ENCODE measurements at regions of chrX and their contacts with region 1.

Region 1: DNA sequence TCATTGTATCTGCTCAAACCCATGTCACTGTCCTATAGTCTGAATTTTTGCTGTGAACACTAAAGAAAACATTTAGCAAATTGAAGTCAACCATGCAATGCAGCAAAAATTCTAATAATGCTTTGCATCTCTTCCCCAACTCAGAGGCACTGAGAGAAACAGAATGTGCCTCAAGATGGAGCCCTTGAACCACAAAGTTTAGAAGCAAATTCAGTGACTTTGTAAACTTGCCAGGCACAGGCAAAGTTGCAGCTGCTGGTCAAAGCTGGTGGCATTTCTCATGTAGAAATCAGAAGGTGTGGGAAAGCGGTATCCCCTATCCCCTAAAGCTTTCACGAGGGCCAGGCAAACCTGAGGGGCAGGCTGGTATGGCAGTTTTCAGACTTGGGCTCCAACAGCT is 121.7 kb upstream of the DIPK2B start:
- DNase-seq: peak; percentile 22 to 30
- ATAC-seq: peak; percentile 83

Region 2: DNA sequence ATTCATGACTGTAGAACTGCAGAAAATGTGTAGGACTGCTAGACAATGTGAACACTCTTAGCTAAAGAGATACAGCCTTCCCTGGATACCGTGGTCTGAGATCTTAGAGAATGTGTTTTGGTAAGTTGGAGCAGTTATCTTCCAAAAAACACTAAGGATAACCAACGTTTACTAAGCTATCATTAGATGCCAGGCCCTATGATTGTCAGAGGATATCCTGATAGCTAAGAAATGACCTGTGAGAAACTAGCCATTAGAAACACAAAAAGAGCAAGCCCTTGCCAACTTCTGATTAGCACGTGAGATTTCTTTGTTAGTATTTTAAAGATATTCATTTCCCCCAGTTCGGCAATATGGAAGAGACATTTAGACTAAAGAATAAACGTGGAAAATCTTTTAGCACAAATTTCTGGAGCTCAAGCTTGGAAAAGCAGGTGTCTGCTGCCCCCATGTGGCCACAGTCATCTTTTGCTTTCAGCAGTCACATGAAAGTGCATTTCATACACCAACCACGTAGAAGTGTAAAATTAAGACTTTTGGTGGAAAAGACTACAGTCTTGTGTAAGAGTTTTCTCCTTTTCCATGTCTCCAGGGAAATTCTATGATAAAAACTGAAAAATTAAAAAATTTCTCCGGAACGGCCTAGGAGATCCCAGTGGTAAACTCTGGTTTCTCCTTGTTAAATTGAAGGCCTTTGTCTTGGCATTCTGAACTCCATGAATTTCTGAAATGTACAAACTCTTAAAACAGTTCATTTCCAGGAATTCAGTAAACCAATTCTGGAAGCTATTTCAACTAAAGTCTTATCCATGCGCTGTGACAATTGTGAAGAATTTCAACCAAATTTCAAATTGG is 1086.4 kb after region 1 on chrX:
- intact Hi-C with region 1: loop called in 1 of 2 experiments (anchors 5 kb)
- DNase-seq: peak; percentile 40 to 85
- ATAC-seq: peak; percentile 42

Measured in left colon (tissue), 2 donors.